Lower lobe of right lung (tissue), 2 donors: ENCODE measurements at regions of chr14 and their contacts with region 1.

Region 1: DNA sequence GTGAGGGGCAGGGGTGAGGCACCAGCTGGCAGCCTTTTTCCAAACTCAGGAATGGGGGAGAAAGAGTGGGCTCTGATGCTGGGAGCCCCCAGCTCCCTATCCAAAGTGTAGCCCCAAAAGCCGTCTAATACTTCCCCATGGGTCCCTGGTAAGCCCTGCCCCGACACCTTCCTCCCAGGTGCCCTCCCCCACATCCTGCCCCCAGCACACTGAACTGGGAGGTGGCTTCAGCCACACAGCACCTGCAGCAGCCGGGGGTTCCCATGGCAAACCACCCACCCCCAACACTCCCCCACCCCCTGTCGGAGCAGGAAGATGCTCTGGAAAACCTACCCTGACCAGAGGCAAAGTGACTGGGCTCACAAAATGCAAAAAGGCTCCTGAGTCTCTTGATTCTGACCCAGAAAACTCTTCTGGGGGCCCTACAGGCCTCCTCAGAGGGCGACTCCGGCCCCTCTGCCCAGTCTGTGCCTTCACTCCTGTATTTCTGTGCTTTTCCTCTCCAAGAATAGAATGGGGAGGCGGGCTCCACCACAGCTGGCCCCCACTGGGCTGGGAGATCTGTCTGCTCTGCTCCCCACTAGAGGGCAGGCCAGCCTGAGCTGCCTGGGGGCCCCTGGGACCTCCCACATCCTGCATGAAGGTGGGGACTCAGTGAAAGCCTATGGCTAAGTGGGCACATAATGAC is 81.6 kb downstream of the ITPK1 start:
- DNase-seq: no peak
- ATAC-seq: peak in 1 of 2 donors; percentile 34
- H3K4me3 ChIP-seq: no peak overlapping the region
- H3K27ac ChIP-seq: no peak overlapping the region
- H3K4me1 ChIP-seq: peaks cover 48% of the 10 kb centered on the region
- H3K27me3 ChIP-seq: no peaks in the 10 kb centered on the region
- CTCF ChIP-seq: peak; percentile 34

Region 2: GRCh38 chr14:92973261-92973797 is 60.8 kb before region 1 on chr14:
- intact Hi-C with region 1: no loop called
- DNase-seq: peak; percentile 76
- ATAC-seq: peak; percentile 67 to 82
- H3K4me3 ChIP-seq: no peak overlapping the region
- H3K27ac ChIP-seq: no peak overlapping the region
- H3K4me1 ChIP-seq: peaks cover 17% of the 10 kb centered on the region
- H3K27me3 ChIP-seq: no peaks in the 10 kb centered on the region
- CTCF ChIP-seq: peak; percentile 71

Region 3: GRCh38 chr14:93112891-93113677 is 79.0 kb after region 1 on chr14:
- intact Hi-C with region 1: loop called (anchors 5 kb)
- DNase-seq: peak; percentile 85
- ATAC-seq: peak; percentile 6 to 17
- H3K4me3 ChIP-seq: peak overlapping the region; percentile 87
- H3K27ac ChIP-seq: peak overlapping the region; percentile 94
- H3K4me1 ChIP-seq: peaks cover 52% of the 10 kb centered on the region
- H3K27me3 ChIP-seq: no peaks in the 10 kb centered on the region
- CTCF ChIP-seq: peak; percentile 88